ENCODE measurements at regions of chr4 and their contacts with region 1.

Region 1: DNA sequence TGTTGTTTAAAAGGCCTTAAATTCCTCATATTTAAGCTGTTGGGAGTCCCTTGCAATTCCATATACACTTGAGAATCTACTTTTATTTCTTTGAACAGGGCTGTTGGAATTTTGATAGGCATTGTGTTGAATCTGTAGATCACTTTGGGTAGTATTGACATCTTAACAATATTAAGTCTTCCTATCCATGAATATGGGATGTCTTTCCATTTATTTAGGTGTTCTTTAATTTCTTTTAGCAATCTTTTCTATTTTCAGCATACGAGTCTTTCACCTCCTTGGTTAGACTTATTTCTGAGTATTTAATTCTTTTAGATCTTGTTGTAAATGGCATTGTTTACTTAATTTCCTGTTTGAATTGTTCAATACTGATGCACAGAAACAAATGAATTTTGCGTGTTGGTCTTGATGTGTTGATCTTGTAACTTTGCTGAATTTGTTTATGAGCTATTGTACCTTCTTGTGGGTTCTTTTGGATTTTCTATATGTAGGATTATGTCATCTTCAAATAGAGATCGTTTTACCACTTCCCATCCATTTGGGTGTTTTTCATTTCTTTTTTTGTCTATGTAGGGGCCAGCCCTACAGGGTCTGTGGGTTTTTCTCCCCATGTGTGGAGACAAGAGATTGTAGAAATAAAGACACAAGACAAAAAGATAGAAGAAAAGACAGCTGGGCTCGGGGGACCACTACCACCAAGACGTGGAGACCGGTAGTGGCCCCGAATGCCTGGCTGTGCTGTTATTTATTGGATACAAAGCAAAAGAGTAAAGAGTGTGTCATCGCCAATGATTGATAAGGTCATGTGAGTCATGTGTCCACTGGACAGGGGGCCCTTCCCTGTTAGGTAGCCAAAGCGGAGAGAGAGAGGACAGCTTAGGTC is 18.2 kb upstream of the CTBP1 start:
- DNase-seq: no peak

Region 2: GRCh38 chr4:1130316-1131186 is 136.6 kb before region 1 on chr4:
- intact Hi-C with region 1: loop called (anchors 5 kb)
- DNase-seq: peak; percentile 51 to 94 (median 76)

Measured in posterior cingulate gyrus (tissue), 11 donors.